B cell (primary cell): ENCODE measurements at regions of chr19 and their contacts with region 1.

Region 1: GRCh38 chr19:13162518-13163314 is 12.5 kb downstream of the IER2 start:
- DNase-seq: peak; percentile 85
- ATAC-seq: peak; percentile 42
- H3K4me3 ChIP-seq: peak overlapping the region; percentile 24 to 71 (median 61)
- H3K4me3 Mint-ChIP-seq: peak overlapping the region; percentile 92
- H3K27ac ChIP-seq: peak overlapping the region; percentile 85 to 94
- H3K27ac Mint-ChIP-seq: peak overlapping the region; percentile 97
- H3K4me1 ChIP-seq: peaks cover 84 to 96% of the 10 kb centered on the region in 2 donors
- H3K4me1 Mint-ChIP-seq: peaks cover 62% of the 10 kb centered on the region
- H3K27me3 ChIP-seq: no peaks in the 10 kb centered on the region
- H3K27me3 Mint-ChIP-seq: no peaks in the 10 kb centered on the region
- CTCF ChIP-seq: no peak

Region 2: DNA sequence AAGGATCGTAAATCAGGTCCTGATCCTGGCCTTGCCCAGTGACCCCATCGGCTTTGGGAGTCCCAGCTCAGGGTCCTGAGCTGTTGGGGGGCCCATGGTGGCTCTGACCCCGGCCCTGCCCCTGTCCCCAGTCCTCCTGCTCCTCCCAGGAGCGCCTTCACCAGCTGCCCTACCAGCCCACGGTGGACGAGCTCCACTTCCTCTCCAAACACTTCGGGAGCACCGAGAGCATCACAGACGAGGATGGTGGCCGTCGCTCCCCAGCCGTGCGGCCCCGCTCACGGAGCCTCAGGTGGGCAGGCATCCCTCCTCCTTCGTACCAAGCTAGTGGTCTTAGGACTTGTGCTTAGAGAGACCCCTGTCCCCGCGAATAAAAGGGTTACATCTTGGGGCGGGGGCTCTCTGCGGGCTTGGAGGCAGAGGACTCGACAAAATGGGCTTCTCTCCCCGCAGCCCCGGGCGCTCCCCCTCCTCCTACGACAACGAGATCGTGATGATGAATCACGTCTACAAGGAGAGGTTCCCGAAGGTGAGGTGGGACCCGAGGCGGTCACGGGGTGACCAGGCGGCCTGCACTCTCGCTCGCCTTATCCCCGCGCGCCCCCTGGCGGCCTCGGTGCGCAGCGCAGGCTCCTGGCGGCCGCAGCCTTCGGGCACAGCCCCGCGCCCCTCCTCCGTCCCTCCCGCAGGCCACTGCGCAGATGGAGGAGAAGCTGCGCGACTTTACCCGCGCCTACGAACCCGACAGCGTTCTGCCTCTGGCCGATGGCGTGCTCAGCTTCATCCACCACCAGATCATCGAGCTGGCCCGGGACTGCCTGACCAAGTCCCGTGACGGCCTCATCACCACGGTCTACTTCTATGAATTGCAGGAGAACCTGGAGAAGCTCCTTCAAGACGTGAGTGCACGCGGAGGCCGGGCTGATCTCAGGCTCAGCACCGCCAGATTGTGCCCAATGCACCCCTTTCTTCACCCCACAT is 315.3 kb before region 1 on chr19:
- CTCF ChIA-PET with region 1: no interaction called
- POLR2A ChIA-PET with region 1: no interaction called
- intact Hi-C with region 1: no loop called
- DNase-seq: peak; percentile 87
- ATAC-seq: peak; percentile 99
- H3K4me3 ChIP-seq: peak overlapping the region in 4 of 5 experiments; percentile 18 to 35 (median 22)
- H3K4me3 Mint-ChIP-seq: peak overlapping the region; percentile 55
- H3K27ac ChIP-seq: no peak overlapping the region
- H3K27ac Mint-ChIP-seq: no peak overlapping the region
- H3K4me1 ChIP-seq: peaks cover 10% of the 10 kb centered on the region in 2 donors
- H3K4me1 Mint-ChIP-seq: peaks cover 6% of the 10 kb centered on the region
- H3K27me3 ChIP-seq: peaks cover 0 to 46% (median 12%) of the 10 kb centered on the region in 4 experiments
- H3K27me3 Mint-ChIP-seq: peaks cover 30% of the 10 kb centered on the region
- CTCF ChIP-seq: peak; percentile 100

Region 3: DNA sequence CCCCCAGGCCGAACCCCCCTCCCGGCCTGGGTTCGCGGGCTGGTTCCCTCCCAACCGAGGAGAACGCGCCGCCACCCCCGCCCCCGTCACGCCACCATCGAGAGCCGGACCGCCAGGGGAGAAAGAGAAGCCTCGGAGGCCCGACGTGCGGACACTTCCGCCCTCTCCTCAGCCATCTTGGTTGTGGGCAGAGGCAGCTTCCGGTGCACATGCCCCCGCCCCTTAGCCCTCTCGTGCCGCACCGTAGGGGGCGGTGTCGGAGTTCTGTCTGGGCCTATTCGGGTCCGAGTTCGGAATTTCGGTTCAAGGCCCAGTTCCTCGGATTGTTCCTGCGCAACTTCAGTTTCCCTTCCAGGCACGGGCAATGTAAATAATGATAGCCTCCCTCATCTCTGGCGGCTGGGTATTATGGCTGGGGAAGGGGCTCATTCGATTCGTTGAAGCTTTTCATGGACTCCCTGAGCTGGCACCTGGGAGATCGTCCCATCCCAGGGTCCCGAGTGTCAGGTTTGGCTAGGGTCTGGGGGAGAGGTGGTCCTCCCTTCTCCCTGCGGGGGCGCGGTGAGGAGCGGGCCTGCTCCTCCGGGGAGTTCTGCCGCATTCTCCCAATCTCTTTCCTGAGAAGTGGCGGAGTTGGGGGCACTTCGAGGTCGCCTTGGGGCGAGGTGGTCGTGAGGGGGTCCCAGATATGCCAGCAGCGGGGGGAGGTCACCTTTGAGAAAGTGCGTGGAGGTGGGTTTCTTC is 12.4 kb before region 1 on chr19 and contains the starts of genes IER2 and STX10:
- CTCF ChIA-PET with region 1: interaction called, 52 read pairs
- POLR2A ChIA-PET with region 1: interaction called, 116 read pairs
- intact Hi-C with region 1: loop called (anchors 2 kb)
- DNase-seq: peak; percentile 96
- ATAC-seq: peak; percentile 53
- H3K4me3 ChIP-seq: peak within 1 kb of the TSS; percentile 82 to 100 (median 98)
- H3K4me3 Mint-ChIP-seq: peak within 1 kb of the TSS; percentile 92
- H3K27ac ChIP-seq: peak within 1 kb of the TSS; percentile 87 to 96
- H3K27ac Mint-ChIP-seq: peak within 1 kb of the TSS; percentile 94
- H3K4me1 ChIP-seq: peaks cover 9 to 32% of the 10 kb centered on the region in 2 donors
- H3K4me1 Mint-ChIP-seq: peaks cover 33% of the 10 kb centered on the region
- H3K27me3 ChIP-seq: no peaks in the 10 kb centered on the region
- H3K27me3 Mint-ChIP-seq: no peaks in the 10 kb centered on the region
- CTCF ChIP-seq: peak; percentile 66
- total RNA-seq, gene IER2: 181 and 189 TPM in 2 replicates
- total RNA-seq, gene STX10: 48.4 and 59.0 TPM in 2 replicates

Region 4: DNA sequence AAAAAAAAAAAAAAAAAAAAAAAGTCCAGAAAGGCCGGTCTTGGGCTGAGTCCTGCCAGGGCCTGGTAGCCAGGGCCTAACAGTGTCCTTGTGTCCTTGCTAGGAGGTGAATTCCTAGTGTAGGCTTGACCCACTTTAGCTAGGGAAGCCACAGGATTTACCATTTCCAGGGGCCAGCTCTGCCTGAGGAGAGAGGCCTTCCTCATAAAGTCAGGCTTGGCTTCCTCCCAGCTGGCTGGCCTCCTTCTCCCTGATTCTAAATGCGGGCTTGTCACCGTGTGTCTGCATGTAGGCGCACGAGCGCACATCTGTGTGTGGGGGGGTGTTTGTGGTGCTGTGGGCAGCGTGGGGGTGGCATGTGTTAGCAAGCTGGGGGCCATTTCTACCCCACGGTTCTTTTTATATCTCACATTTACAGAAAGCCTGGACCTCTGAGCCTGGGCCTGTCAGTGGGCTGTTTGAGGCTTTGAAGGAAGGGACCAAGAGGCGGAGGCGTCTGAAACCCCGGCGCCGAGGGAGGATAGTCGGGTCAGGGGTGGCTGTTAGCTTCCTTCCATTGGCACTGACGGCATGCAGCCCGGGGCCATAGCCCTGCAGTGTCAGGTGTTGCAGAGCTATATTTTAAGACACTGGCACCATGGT is 19.2 kb after region 1 on chr19:
- CTCF ChIA-PET with region 1: interaction called, 33 read pairs
- POLR2A ChIA-PET with region 1: interaction called, 38 read pairs
- intact Hi-C with region 1: no loop called
- DNase-seq: peak; percentile 49
- ATAC-seq: peak; percentile 58
- H3K4me3 ChIP-seq: no peak overlapping the region
- H3K4me3 Mint-ChIP-seq: peak overlapping the region; percentile 62
- H3K27ac ChIP-seq: no peak overlapping the region
- H3K27ac Mint-ChIP-seq: peak overlapping the region; percentile 84
- H3K4me1 ChIP-seq: peaks cover 27 to 37% of the 10 kb centered on the region in 2 donors
- H3K4me1 Mint-ChIP-seq: peaks cover 29% of the 10 kb centered on the region
- H3K27me3 ChIP-seq: no peaks in the 10 kb centered on the region
- H3K27me3 Mint-ChIP-seq: no peaks in the 10 kb centered on the region
- CTCF ChIP-seq: no peak

Region 5: DNA sequence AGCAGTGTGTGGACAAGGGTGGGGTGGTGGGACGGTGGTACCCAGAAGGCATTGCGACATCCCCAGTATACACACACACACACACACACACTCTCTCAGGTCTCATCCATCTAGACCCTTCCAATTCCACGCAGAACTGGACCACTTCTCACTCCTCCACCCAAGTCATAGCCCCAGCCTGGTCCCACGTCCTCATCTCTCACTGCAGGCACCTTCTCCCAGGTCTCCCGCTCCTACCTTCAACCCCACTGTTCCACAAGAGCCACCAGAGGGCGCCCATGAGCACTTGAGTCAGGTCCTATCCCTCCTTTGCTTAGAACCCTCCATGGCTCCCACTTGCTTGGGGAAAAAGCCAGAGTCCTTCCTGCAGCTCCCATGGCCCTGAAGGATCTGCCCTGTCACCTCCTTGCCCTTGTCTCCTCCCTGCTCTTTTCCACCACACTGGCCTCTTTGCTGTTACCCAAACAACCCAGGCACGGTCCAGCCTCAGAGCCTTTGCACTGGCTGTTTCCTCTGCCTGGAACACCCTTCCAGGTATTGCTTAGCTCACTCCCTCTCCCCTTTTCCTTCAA is 50.1 kb after region 1 on chr19:
- CTCF ChIA-PET with region 1: interaction called, 4 read pairs
- POLR2A ChIA-PET with region 1: interaction called, 7 read pairs
- intact Hi-C with region 1: loop called (anchors 2 kb)
- DNase-seq: peak; percentile 77
- ATAC-seq: no peak
- H3K4me3 ChIP-seq: no peak overlapping the region
- H3K4me3 Mint-ChIP-seq: peak overlapping the region; percentile 44
- H3K27ac ChIP-seq: no peak overlapping the region
- H3K27ac Mint-ChIP-seq: peak overlapping the region; percentile 29
- H3K4me1 ChIP-seq: peaks cover 41 to 54% of the 10 kb centered on the region in 2 donors
- H3K4me1 Mint-ChIP-seq: peaks cover 62% of the 10 kb centered on the region
- H3K27me3 ChIP-seq: no peaks in the 10 kb centered on the region
- H3K27me3 Mint-ChIP-seq: no peaks in the 10 kb centered on the region
- CTCF ChIP-seq: peak; percentile 69

Region 6: DNA sequence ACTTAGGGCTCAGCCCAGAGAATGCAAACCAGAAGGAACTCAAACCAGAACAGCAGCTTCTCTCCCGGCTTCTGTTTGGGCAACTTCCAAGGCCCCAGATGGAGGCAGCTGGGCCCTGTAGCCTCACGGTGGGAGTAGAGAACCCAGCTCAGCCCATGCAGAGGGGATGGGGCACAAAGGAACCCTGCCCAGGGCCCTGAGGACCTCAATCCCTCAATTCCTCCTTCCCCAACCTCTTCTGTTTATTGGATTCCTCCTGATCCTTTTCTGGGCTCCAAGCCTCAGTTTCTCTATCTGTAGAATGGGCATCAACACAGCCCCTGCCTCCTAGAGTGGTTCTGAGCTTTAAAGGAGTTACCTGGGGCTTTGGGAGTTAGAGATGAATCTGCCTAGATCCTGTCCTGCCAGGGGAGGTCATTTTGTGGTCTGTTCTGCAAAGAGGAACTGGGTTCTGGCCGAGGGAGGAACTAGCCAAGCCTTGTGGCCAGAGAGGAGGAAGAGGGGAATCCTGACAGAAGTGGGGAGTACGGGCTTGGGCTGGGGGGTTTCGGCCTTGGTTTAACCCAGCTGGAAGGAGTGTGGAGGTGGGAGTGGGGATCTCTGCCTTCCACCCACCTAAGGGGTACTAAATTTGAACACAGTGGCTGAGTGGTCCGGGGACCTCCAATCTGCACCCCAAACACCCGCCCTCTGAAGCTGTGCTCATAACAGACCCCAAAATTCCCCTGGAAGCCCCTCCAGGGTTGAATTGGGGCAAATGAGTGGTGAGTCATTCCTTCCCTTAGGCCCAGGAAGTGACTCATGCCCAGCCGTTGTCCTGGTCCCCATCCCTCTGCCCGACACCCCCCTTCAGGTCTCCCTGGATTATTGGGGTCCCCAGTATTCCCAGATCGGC is 1221.2 kb after region 1 on chr19:
- CTCF ChIA-PET with region 1: no interaction called
- POLR2A ChIA-PET with region 1: no interaction called
- intact Hi-C with region 1: loop called (anchors 5 kb)
- DNase-seq: peak; percentile 68
- ATAC-seq: peak; percentile 12
- H3K4me3 ChIP-seq: peak overlapping the region; percentile 19 to 90 (median 39)
- H3K4me3 Mint-ChIP-seq: peak overlapping the region; percentile 85
- H3K27ac ChIP-seq: peak overlapping the region; percentile 97 to 99
- H3K27ac Mint-ChIP-seq: peak overlapping the region; percentile 89
- H3K4me1 ChIP-seq: peaks cover 48 to 70% of the 10 kb centered on the region in 2 donors
- H3K4me1 Mint-ChIP-seq: peaks cover 51% of the 10 kb centered on the region
- H3K27me3 ChIP-seq: no peaks in the 10 kb centered on the region
- H3K27me3 Mint-ChIP-seq: no peaks in the 10 kb centered on the region
- CTCF ChIP-seq: no peak